A673 (cell line): ENCODE measurements at regions of chr16 and their contacts with region 1.

Region 1: DNA sequence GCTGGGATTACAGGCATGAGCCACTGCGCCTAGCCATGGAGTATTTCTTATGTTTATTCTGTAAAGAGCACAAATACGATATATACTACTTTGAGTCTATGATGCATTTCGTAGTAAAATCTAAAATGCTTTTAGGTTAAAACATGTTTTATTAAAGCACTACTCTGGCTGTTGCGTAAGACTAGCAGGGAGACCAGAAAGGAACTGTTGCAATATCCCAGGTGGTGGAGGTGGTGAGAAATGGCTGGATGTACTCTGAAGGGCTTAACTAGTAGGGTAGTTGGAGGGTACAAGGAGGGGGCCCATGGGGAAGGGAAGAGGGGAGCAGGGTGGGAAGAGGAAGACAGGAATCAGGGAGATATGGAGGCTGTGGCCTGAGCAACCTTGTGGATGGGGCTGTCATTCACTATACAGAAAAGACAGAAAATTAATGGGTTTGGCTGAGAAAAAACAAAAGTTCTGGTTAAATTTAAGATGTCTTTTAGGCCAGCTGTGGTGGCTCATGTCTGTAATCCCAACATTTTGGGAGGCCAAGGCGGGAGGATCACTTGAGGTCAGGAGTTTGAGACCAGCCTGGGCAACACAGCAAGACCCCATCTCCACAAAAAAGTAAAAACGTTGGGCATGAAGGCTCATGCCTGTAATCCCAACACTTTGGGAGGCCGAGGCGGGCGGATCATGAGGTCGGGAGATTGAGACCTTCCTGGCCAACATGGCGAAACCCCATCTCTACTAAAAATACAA is 35.8 kb downstream of the ST3GAL2 start:
- DNase-seq: no peak
- H3K4me3 ChIP-seq: no peak overlapping the region
- H3K27ac ChIP-seq: no peak overlapping the region
- H3K4me1 ChIP-seq: peaks cover 13% of the 10 kb centered on the region
- H3K27me3 ChIP-seq: no peaks in the 10 kb centered on the region
- CTCF ChIP-seq: no peak

Region 2: DNA sequence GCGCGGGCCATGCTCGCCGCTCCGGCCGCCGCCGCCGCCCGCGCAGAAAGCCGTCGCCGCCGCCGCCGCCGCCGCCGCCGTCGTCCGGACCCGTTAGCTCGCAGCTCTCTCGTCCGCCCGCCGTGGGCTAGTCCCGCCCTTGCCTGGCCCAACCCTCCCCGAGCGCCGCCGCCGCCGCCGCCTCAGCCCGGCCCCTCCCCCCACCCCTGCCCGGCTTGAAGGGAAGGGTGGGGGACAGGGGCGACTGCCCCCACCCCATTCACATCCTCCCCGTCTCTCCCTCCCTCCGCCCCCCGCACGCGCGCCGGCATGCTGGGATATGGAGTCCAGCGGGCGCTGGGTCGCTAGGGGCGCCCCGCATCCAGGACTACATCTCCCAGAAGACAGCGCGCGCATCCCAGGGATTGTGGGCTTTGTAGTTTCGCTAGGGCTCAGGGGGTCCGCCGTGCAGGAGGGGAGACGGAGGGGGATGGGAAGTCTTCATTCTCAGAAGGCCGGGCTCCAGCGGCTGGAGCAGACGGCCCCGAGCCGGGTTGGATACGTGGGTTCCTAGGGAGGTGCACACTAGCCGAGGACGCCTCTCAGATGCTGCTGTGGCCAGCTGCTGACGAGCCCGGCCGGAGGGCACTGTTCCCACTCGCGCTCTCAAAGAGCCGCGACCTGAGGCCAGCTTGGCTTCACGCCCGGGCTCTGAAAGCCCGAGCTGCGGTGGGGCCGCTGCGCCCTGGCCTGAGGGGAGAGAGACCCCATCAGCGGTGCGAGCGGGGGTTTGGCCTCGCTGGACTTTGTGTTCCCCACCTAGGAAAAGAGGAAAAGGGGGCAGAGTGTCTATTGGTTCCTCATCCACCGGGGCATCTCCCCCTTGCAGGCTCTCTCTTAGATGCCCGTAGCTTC is 36.1 kb after region 1 on chr16 and contains the start of gene ST3GAL2:
- CTCF ChIA-PET with region 1: interaction called, 4 read pairs
- POLR2A ChIA-PET with region 1: no interaction called
- intact Hi-C with region 1: loop called (anchors 5 kb)
- DNase-seq: peak; percentile 99
- H3K4me3 ChIP-seq: peak within 1 kb of the TSS; percentile 73
- H3K27ac ChIP-seq: peak within 1 kb of the TSS; percentile 63
- H3K4me1 ChIP-seq: peaks cover 16% of the 10 kb centered on the region
- H3K27me3 ChIP-seq: no peaks in the 10 kb centered on the region
- CTCF ChIP-seq: no peak
- total RNA-seq, gene ST3GAL2: 26.5 and 29.0 TPM in 2 replicates